ENCODE measurements at regions of chr16 and their contacts with region 1.

Region 1: GRCh38 chr16:17497648-17498047 is 26.9 kb upstream of the XYLT1 start:
- DNase-seq: no peak
- ATAC-seq: no peak

Region 2: DNA sequence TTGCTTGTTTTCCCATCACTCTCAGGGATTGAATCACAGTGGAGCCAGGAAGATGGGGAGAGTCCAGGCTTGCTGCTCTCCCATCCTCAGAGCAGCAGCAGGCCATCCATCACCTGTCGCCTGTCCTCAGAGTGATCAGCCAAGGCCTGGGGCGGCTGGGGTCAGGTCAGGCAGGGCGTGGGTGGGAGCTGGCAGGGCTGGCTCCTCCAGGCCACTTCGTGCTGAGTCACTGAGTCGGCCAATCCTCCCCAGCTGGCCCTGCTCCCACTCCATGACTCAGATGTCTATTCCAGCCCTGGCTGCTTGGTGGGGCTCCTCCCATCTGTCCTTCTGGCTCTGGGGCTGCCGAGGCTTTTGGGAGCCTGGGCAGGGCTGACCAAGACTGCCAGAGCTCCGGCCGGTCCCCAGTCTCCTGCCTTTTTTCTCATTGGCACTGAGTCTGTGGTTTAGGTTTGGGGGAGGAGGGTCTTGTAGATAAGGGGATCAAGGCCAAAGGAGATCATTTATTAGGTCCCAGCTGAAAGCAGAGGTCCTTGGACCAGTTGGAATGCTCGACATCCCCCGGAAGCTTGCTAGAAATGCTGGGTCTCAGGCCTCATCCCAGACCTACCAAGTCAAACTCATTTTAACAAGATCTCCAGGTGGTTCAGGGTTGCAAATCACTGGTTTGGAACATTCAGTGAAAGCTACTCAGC is 1475.5 kb before region 1 on chr16:
- intact Hi-C with region 1: no loop called
- DNase-seq: peak; percentile 93
- ATAC-seq: peak; percentile 96

Region 3: GRCh38 chr16:17585449-17586074 is 87.9 kb after region 1 on chr16:
- intact Hi-C with region 1: no loop called
- DNase-seq: no peak
- ATAC-seq: no peak

Region 4: DNA sequence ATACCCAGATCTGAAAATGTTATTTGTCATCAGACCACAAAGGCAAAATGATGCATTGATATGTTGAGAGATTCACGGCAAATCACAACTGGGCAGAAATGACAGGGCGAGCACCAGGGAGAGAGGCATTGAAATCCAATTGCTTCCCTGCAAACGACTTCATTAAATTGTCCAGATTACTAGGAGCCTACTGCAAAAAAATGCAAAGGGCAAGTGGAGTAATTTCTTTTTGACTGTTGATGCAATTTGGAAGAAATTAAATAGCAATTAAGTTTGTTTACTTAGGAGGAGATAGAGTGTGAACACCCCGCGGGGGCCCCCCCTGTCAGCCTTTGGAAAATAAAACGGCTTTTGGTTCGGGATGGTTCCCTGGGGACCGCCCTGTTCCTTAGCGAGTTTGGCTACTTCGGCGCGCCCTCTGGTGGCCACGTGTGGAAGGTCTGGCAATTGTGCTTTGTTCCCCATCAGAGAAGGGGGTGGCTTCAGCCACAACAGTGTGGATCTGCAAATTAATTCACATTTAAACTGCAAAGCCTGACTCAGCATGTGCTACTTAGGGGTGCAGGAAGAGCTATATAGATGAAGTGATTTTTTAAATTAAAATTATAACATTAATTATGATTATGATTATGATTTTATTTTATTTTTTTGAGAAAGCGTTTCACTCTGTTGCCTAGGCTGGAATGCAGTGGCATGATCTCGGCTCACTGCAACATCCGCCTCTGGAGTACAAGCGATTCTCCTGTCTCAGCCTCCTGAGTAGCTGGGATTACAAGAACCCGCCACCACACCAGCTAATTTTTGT is 1471.6 kb after region 1 on chr16:
- intact Hi-C with region 1: loop called (anchors 5 kb)
- DNase-seq: peak; percentile 93
- ATAC-seq: peak; percentile 93